ENCODE measurements at regions of chr14 and their contacts with region 1.

Region 1: DNA sequence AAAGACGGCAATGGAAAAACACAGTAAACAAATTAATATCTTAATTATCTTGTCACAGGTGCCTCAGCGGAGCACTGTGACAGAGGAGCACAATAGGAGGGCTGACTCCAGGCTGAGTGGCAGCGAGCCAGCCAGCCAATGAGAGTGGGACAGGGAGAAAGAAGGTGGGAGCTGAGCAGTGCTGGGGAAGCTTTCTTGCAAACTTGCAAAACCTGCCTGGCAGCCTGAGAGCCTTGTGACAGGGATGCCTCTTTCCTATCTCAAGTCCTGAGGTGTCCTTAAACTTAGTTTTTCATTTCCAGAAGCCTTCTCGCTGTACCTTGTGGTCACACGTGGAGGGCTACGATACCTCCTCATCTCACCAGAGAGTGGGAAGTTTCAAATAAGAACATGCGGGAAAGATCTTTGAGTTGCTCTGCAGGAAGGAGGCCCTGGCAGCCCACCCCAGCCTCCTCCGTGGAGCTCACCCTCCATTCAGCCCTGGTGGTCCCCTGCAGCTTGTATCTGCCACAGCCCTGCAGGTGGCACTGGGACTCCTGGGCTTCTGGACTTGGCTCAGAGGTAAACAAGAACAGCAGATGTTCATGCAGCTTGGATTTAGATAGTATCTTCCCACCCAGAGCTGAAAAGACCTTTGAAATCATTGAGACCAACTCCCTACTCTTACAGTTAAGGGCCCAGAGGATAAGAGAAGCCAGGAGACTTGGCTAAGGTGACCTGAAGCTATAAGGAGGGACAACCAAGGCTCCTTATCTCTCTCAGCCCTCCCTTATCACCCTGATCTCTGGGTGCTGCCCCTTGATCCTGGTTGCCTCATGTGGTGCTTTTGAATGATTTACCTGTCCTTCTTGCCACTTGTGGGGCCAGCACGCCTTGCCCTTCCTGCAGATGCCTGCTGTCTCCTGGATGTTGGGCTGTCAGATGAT is 153.5 kb upstream of the MAX start:
- DNase-seq: peak in 5 of 9 experiments; percentile 11 to 48 (median 17)
- ATAC-seq: peak; percentile 54
- H3K4me3 ChIP-seq: no peak overlapping the region
- H3K4me3 Mint-ChIP-seq: no peak overlapping the region
- H3K27ac ChIP-seq: no peak overlapping the region
- H3K27ac Mint-ChIP-seq: no peak overlapping the region
- H3K4me1 ChIP-seq: peaks cover 7% of the 10 kb centered on the region
- H3K4me1 Mint-ChIP-seq: peaks cover 30% of the 10 kb centered on the region
- H3K27me3 ChIP-seq: no peaks in the 10 kb centered on the region
- H3K27me3 Mint-ChIP-seq: no peaks in the 10 kb centered on the region
- CTCF ChIP-seq: no peak

Region 2: GRCh38 chr14:65302571-65303189 is 46.9 kb after region 1 on chr14:
- CTCF ChIA-PET with region 1: no interaction called
- POLR2A ChIA-PET with region 1: no interaction called
- intact Hi-C with region 1: loop called in 1 of 2 experiments (anchors 1 kb)
- DNase-seq: peak in 2 of 9 experiments; percentile 29 to 50
- ATAC-seq: peak; percentile 64
- H3K4me3 ChIP-seq: no peak overlapping the region
- H3K4me3 Mint-ChIP-seq: peak overlapping the region; percentile 37
- H3K27ac ChIP-seq: no peak overlapping the region
- H3K27ac Mint-ChIP-seq: peak overlapping the region; percentile 77
- H3K4me1 ChIP-seq: peaks cover 37% of the 10 kb centered on the region
- H3K4me1 Mint-ChIP-seq: peaks cover 62% of the 10 kb centered on the region
- H3K27me3 ChIP-seq: no peaks in the 10 kb centered on the region
- H3K27me3 Mint-ChIP-seq: no peaks in the 10 kb centered on the region
- CTCF ChIP-seq: no peak

Region 3: GRCh38 chr14:65927931-65928356 is 672.1 kb after region 1 on chr14:
- CTCF ChIA-PET with region 1: no interaction called
- POLR2A ChIA-PET with region 1: no interaction called
- intact Hi-C with region 1: no loop called
- DNase-seq: peak; percentile 41 to 84 (median 77)
- ATAC-seq: peak; percentile 89
- H3K4me3 ChIP-seq: no peak overlapping the region
- H3K4me3 Mint-ChIP-seq: peak overlapping the region; percentile 56
- H3K27ac ChIP-seq: peak overlapping the region; percentile 43 to 68
- H3K27ac Mint-ChIP-seq: peak overlapping the region; percentile 87
- H3K4me1 ChIP-seq: peaks cover 45% of the 10 kb centered on the region
- H3K4me1 Mint-ChIP-seq: peaks cover 55% of the 10 kb centered on the region
- H3K27me3 ChIP-seq: no peaks in the 10 kb centered on the region
- H3K27me3 Mint-ChIP-seq: no peaks in the 10 kb centered on the region
- CTCF ChIP-seq: no peak